Tibial artery (tissue), 4 donors: ENCODE measurements at regions of chr3 and their contacts with region 1.

Region 1: GRCh38 chr3:30518181-30518864 is 88.1 kb upstream of the TGFBR2 start:
- DNase-seq: peak; percentile 80 to 81
- H3K4me3 ChIP-seq: no peak overlapping the region
- H3K27ac ChIP-seq: peak overlapping the region; percentile 70 to 81
- H3K4me1 ChIP-seq: peaks cover 0 to 83% (median 36%) of the 10 kb centered on the region in 4 donors
- H3K27me3 ChIP-seq: no peaks in the 10 kb centered on the region
- CTCF ChIP-seq: peak in 1 of 2 experiments; percentile 20

Region 2: DNA sequence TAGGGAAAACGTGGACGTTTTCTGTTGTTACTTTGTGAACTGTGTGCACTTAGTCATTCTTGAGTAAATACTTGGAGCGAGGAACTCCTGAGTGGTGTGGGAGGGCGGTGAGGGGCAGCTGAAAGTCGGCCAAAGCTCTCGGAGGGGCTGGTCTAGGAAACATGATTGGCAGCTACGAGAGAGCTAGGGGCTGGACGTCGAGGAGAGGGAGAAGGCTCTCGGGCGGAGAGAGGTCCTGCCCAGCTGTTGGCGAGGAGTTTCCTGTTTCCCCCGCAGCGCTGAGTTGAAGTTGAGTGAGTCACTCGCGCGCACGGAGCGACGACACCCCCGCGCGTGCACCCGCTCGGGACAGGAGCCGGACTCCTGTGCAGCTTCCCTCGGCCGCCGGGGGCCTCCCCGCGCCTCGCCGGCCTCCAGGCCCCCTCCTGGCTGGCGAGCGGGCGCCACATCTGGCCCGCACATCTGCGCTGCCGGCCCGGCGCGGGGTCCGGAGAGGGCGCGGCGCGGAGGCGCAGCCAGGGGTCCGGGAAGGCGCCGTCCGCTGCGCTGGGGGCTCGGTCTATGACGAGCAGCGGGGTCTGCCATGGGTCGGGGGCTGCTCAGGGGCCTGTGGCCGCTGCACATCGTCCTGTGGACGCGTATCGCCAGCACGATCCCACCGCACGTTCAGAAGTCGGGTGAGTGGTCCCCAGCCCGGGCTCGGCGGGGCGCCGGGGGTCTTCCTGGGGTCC is 88.1 kb after region 1 on chr3 and contains the start of gene TGFBR2:
- intact Hi-C with region 1: loop called (anchors 2 kb)
- DNase-seq: peak; percentile 97
- H3K4me3 ChIP-seq: peak within 1 kb of the TSS; percentile 94 to 98
- H3K27ac ChIP-seq: peak within 1 kb of the TSS; percentile 95 to 99
- H3K4me1 ChIP-seq: peaks cover 0 to 47% (median 13%) of the 10 kb centered on the region in 4 donors
- H3K27me3 ChIP-seq: no peaks in the 10 kb centered on the region
- CTCF ChIP-seq: peak; percentile 34 to 49